T-cell (primary cell): ENCODE measurements at regions of chr1 and their contacts with region 1.

Region 1: DNA sequence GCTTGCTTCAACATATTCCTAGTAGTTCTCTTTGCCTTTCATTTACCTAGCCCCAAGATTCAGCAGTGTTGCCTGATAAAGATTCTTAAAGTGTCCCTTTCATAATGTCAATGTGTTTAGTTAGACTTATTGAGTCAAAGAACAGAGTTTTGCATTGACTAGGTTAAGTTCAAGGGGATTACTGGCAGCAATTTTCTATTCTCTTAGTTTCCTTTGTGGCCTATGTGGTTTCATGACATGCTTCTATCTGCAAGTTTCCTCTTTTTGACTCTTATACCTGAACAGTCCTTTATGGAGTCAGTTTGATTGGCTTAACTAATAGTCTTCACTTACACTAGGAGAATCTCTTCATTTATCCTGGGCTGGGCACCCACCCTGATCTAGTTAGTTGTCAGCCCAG is 151.3 kb downstream of the ADGRL4 start:
- DNase-seq: no peak
- ATAC-seq: no peak
- H3K4me3 ChIP-seq: no peak overlapping the region
- H3K4me3 Mint-ChIP-seq: no peak overlapping the region
- H3K27ac ChIP-seq: no peak overlapping the region
- H3K27ac Mint-ChIP-seq: no peak overlapping the region
- H3K4me1 ChIP-seq: no peaks in the 10 kb centered on the region
- H3K4me1 Mint-ChIP-seq: no peaks in the 10 kb centered on the region
- H3K27me3 ChIP-seq: no peaks in the 10 kb centered on the region
- H3K27me3 Mint-ChIP-seq: peaks cover 0 to 7% of the 10 kb centered on the region in 2 donors

Region 2: DNA sequence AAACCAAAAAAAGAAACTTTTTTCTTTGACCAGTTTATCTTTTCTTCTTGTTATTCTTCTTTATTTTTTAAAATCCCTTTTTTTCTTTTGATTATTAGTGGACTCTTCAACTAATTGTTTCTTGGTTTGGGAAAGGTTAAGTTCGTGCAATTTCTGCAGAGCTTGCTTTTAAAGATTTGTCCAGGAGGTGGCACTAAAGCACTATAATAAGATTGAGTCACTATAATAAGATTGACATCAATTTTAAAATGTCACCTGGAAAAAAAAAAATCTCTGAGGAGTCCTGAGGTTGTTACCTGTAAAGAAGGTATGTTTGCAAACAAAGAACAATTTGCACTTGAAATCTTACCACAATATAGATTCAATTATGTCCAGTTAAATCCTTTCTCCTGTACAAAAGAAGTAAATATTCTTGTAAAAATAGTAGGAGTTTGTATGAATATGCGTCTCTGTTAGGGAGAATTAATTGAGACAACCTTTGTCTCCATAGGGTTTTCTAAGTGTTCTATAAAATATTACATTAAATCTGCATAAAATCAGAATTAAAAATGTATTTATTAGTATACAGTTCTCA is 15.5 kb before region 1 on chr1:
- CTCF ChIA-PET with region 1: no interaction called
- POLR2A ChIA-PET with region 1: no interaction called
- DNase-seq: peak in 5 of 35 experiments; percentile 1 to 48 (median 2)
- ATAC-seq: no peak
- H3K4me3 ChIP-seq: no peak overlapping the region
- H3K4me3 Mint-ChIP-seq: no peak overlapping the region
- H3K27ac ChIP-seq: no peak overlapping the region
- H3K27ac Mint-ChIP-seq: no peak overlapping the region
- H3K4me1 ChIP-seq: peaks cover 0 to 2% of the 10 kb centered on the region in 2 experiments
- H3K4me1 Mint-ChIP-seq: peaks cover 13 to 21% (median 13%) of the 10 kb centered on the region in 3 donors
- H3K27me3 ChIP-seq: no peaks in the 10 kb centered on the region
- H3K27me3 Mint-ChIP-seq: no peaks in the 10 kb centered on the region

Region 3: DNA sequence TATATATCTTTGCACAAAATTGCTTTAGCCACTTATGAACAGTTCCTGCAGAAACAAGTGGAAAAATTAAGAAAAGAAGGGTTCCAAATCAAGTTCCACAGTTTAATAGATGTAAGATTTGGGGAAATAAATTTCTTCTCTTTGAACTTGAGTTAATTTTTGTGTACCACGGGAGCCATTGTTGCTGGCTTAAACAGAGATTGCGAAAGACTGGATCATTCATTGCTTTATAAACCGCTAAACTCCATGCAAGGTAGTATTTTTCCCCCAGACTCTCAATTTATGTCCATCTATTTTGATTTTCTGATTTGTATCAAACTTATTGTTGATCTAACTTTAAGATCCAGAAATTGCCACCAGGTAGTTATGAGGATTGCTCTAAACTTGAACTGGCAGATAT is 397.3 kb after region 1 on chr1:
- CTCF ChIA-PET with region 1: no interaction called
- POLR2A ChIA-PET with region 1: interaction called in 1 of 2 experiments, 13 read pairs
- DNase-seq: no peak
- ATAC-seq: no peak
- H3K4me3 ChIP-seq: no peak overlapping the region
- H3K4me3 Mint-ChIP-seq: no peak overlapping the region
- H3K27ac ChIP-seq: no peak overlapping the region
- H3K27ac Mint-ChIP-seq: no peak overlapping the region
- H3K4me1 ChIP-seq: no peaks in the 10 kb centered on the region
- H3K4me1 Mint-ChIP-seq: no peaks in the 10 kb centered on the region
- H3K27me3 ChIP-seq: no peaks in the 10 kb centered on the region
- H3K27me3 Mint-ChIP-seq: no peaks in the 10 kb centered on the region